ENCODE measurements at regions of chr1 and their contacts with region 1.

Region 1: DNA sequence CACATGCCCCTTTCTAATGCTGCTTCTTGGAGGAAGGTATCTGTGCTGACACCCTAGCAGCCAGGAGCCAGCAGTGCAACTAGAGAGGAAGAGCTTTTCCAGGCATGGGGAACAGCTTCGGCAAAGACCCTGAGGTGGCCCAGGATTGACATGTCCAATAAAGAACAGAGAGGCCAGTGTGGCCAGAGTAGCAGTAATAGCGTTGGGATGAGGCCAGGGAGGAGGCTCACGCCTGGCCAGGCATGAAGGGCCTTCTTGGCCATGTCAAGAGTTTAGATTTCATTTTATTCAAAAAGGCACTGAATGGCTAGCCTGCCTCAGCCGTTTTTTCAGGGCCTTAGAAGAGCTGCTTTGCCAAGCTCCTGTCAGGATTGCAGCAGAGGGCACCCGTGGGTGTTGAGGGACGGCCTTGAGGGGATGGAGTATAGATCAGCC is 16.3 kb upstream of the ADAMTSL4 start:
- DNase-seq: no peak
- H3K4me3 ChIP-seq: no peak overlapping the region
- H3K4me3 Mint-ChIP-seq: no peak overlapping the region
- H3K27ac ChIP-seq: no peak overlapping the region
- H3K27ac Mint-ChIP-seq: peak overlapping the region in 2 of 7 donors; percentile 31 to 42
- H3K4me1 ChIP-seq: no peaks in the 10 kb centered on the region
- H3K4me1 Mint-ChIP-seq: peaks cover 0 to 6% (median 4%) of the 10 kb centered on the region in 4 donors
- H3K27me3 ChIP-seq: no peaks in the 10 kb centered on the region
- H3K27me3 Mint-ChIP-seq: peaks cover 0 to 6% of the 10 kb centered on the region in 2 donors

Region 2: GRCh38 chr1:150515328-150516048 is 17.4 kb before region 1 on chr1 and contains the start of gene FALEC:
- CTCF ChIA-PET with region 1: interaction called, 18 read pairs
- POLR2A ChIA-PET with region 1: interaction called, 4 read pairs
- intact Hi-C with region 1: loop called (anchors 1 kb)
- DNase-seq: peak; percentile 87 to 91 (median 89)
- H3K4me3 ChIP-seq: peak within 1 kb of the TSS; percentile 69 to 73
- H3K4me3 Mint-ChIP-seq: peak within 1 kb of the TSS; percentile 83 to 94 (median 92)
- H3K27ac ChIP-seq: peak within 1 kb of the TSS; percentile 53
- H3K27ac Mint-ChIP-seq: peak within 1 kb of the TSS; percentile 61 to 93 (median 89)
- H3K4me1 ChIP-seq: peaks cover 11% of the 10 kb centered on the region
- H3K4me1 Mint-ChIP-seq: peaks cover 8 to 20% (median 12%) of the 10 kb centered on the region in 4 donors
- H3K27me3 ChIP-seq: no peaks in the 10 kb centered on the region
- H3K27me3 Mint-ChIP-seq: no peaks in the 10 kb centered on the region
- total RNA-seq, gene FALEC: 0.64 TPM in 1 of 2 experiments, not detected in the other

Region 3: DNA sequence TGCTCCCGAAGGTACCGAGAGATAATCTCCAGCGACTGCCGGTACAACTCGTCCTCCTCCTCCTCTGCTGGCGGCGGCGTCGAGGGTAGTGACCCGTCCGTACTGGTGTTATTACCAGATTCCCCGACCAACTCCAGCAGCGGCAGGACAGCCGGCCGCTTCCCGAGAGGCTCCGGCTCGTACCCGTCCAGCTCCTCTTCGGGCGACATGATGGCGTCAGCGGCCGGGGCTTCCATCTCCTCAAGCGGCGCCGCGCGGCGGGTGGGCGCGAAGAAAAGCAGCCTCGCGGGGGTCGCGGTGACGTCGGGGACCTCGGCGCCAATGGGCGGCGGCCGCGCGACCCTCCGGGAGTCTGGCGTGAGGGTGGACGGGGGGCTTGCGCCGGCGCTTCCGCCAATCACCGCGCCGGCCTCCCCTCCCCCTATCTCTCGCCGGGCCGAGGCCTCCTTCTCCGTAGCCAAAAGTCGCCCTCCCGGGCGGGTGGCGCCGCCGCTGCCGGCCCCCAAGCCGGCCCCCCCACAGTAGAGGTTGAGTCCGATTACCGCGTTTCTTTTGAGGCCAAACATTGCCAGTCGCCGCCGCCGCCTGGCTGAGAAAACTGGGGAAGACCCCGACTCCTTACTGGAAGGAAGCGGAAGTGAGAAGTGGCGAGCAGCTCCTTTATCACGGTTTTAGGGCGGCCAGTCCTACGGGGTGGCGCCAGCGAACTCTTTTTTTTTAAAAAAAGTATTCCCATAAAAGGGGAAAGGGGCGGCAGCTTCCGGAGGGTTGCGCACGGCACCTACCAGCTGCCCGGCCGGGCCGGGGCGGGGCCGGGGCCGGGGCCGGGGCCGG is 46.3 kb after region 1 on chr1 and contains the start of gene MCL1:
- CTCF ChIA-PET with region 1: no interaction called
- POLR2A ChIA-PET with region 1: no interaction called
- intact Hi-C with region 1: no loop called
- DNase-seq: peak; percentile 86 to 94 (median 89)
- H3K4me3 ChIP-seq: peak within 1 kb of the TSS; percentile 96 to 100
- H3K4me3 Mint-ChIP-seq: peak within 1 kb of the TSS; percentile 98 to 100 (median 99)
- H3K27ac ChIP-seq: peak within 1 kb of the TSS; percentile 97
- H3K27ac Mint-ChIP-seq: peak within 1 kb of the TSS; percentile 94 to 99 (median 99)
- H3K4me1 ChIP-seq: peaks cover 33% of the 10 kb centered on the region
- H3K4me1 Mint-ChIP-seq: peaks cover 18 to 58% (median 28%) of the 10 kb centered on the region in 4 donors
- H3K27me3 ChIP-seq: no peaks in the 10 kb centered on the region
- H3K27me3 Mint-ChIP-seq: no peaks in the 10 kb centered on the region
- total RNA-seq, gene MCL1: 314 to 331 TPM

Region 4: DNA sequence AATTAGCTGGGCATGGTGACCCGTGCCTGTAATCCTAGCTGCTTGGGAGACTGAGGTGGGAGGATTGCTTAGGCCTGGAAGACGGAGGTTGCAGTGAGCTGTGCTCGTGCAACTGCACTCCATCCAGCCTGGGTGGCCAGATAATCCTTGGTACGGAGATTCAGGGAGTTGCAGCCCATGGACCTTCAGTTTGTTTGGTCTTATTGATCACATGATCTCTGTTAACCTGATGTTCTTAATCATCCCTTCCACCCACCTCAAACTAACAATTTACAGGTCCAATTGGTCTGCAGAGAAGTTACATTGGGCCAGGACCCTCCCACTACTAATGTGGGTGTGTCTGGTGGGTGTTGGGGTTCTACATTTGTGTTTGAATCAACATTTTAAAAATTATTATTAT is 382.3 kb after region 1 on chr1:
- CTCF ChIA-PET with region 1: no interaction called
- POLR2A ChIA-PET with region 1: no interaction called
- intact Hi-C with region 1: no loop called
- DNase-seq: no peak
- H3K4me3 ChIP-seq: no peak overlapping the region
- H3K4me3 Mint-ChIP-seq: no peak overlapping the region
- H3K27ac ChIP-seq: no peak overlapping the region
- H3K27ac Mint-ChIP-seq: no peak overlapping the region
- H3K4me1 ChIP-seq: no peaks in the 10 kb centered on the region
- H3K4me1 Mint-ChIP-seq: no peaks in the 10 kb centered on the region
- H3K27me3 ChIP-seq: no peaks in the 10 kb centered on the region
- H3K27me3 Mint-ChIP-seq: no peaks in the 10 kb centered on the region